Heart right ventricle (tissue), 16 donors: ENCODE measurements at regions of chr20 and their contacts with region 1.

Region 1: GRCh38 chr20:52948491-52948890 is 23.7 kb upstream of the TSHZ2 start:
- DNase-seq: no peak
- ATAC-seq: no peak
- H3K4me3 ChIP-seq: no peak overlapping the region
- H3K27ac ChIP-seq: no peak overlapping the region
- H3K4me1 ChIP-seq: no peaks in the 10 kb centered on the region
- H3K27me3 ChIP-seq: no peaks in the 10 kb centered on the region
- CTCF ChIP-seq: no peak

Region 2: DNA sequence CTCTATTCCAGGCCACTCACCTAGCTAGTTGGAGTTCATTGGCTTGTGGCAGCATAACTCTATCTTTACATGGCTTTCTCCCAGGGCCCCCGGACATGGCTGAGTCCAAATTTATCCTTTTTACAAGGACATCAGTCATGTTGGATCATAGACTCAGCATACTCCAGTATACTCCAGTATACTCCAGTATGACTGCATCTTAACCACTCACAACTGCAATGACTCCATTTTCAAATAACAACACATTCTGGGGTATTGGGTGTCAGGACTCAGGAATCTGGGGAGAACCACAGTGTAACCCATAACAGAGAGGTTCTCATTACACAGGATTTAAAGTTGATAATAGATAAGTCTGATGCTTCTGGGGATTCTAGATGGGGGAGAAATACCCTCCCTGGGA is 30.2 kb before region 1 on chr20:
- intact Hi-C with region 1: loop called in 1 of 10 experiments (anchors 1 kb)
- DNase-seq: no peak
- ATAC-seq: no peak
- H3K4me3 ChIP-seq: no peak overlapping the region
- H3K27ac ChIP-seq: no peak overlapping the region
- H3K4me1 ChIP-seq: peaks cover 0 to 7% (median 0%) of the 10 kb centered on the region in 9 donors
- H3K27me3 ChIP-seq: no peaks in the 10 kb centered on the region
- CTCF ChIP-seq: no peak

Region 3: DNA sequence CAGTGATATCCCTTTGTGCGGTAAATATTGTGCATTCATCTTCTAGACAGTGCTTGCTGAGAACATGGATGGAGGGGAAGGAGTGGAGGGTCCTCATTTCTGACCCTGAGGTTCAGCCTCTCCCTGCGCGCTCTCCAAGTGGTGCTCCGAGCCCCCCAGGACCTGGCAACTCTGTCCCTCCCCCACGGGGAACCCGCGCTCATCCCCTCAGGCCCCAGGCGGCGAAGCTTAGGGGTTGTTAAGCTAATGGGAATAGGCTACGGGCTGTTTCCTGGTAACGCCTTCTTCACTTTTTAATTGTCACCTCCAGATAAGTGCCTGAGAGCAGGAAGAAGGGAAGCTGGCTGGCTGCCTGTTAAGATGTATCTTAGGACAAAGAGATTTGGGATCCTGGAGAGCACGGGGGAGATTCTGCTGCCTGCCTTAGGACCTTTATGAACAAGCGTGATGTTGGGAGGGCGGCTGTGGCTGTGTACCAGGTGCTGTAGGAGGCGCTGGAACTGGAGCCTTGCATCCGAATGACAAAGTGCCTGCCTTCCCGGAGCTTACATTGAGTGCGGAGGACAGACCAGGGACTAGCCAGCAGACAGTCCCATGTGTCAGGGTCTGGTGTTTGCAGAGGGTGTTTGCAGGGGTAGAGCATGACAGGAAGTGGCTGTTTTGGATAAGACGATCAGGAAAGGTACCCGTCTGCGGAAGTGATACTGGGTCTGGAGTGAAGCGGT is 35.4 kb after region 1 on chr20:
- intact Hi-C with region 1: no loop called
- DNase-seq: no peak
- ATAC-seq: no peak
- H3K4me3 ChIP-seq: no peak overlapping the region
- H3K27ac ChIP-seq: no peak overlapping the region
- H3K4me1 ChIP-seq: peaks cover 0 to 3% (median 0%) of the 10 kb centered on the region in 9 donors
- H3K27me3 ChIP-seq: peaks cover 0 to 5% (median 0%) of the 10 kb centered on the region in 7 donors
- CTCF ChIP-seq: no peak